ENCODE measurements at regions of chr4 and their contacts with region 1.

Region 1: DNA sequence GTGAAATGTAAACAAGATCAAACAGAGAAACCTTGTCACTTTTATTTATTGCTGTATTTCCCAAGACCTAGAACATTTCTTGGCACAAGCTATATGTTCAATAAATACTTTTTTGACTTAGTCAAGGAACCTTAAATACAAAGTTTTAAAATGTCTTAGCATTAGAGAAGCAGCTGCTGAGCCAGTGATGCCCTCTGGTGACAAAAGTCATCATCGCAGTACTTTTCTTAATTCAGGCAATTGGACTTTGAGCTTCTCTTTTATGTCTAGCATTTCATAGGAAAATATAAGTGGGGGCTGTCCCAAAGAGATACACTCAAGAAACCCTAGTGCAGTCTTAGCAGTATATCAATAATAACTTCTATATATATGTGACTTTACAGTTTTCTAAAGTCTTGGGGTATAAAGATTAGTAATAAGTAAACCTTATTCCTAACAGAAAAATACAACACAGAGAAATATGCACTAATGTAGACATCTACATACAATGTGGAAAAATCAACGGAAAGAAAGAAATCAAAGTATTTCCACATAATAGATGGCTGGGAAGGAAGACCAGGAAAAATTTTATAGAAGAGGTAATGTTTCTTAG is 118.4 kb downstream of the DTHD1 start:
- DNase-seq: peak in 32 of 35 experiments; percentile 7 to 79 (median 42)
- ATAC-seq: peak; percentile 40 to 62 (median 46)
- H3K4me3 ChIP-seq: no peak overlapping the region
- H3K4me3 Mint-ChIP-seq: no peak overlapping the region
- H3K27ac ChIP-seq: no peak overlapping the region
- H3K27ac Mint-ChIP-seq: no peak overlapping the region
- H3K4me1 ChIP-seq: peaks cover 0 to 4% of the 10 kb centered on the region in 2 experiments
- H3K4me1 Mint-ChIP-seq: peaks cover 0 to 7% (median 5%) of the 10 kb centered on the region in 3 donors
- H3K27me3 ChIP-seq: no peaks in the 10 kb centered on the region
- H3K27me3 Mint-ChIP-seq: no peaks in the 10 kb centered on the region

Region 2: GRCh38 chr4:36343501-36344175 is 56.2 kb before region 1 on chr4:
- CTCF ChIA-PET with region 1: interaction called, 54 to 74 read pairs
- POLR2A ChIA-PET with region 1: no interaction called
- DNase-seq: no peak
- ATAC-seq: no peak
- H3K4me3 ChIP-seq: no peak overlapping the region
- H3K4me3 Mint-ChIP-seq: no peak overlapping the region
- H3K27ac ChIP-seq: no peak overlapping the region
- H3K27ac Mint-ChIP-seq: no peak overlapping the region
- H3K4me1 ChIP-seq: peaks cover 0 to 2% of the 10 kb centered on the region in 2 experiments
- H3K4me1 Mint-ChIP-seq: peaks cover 2 to 4% (median 3%) of the 10 kb centered on the region in 3 donors
- H3K27me3 ChIP-seq: no peaks in the 10 kb centered on the region
- H3K27me3 Mint-ChIP-seq: no peaks in the 10 kb centered on the region

Region 3: GRCh38 chr4:36351082-36351666 is 48.7 kb before region 1 on chr4:
- CTCF ChIA-PET with region 1: interaction called, 54 to 74 read pairs
- POLR2A ChIA-PET with region 1: interaction called in 1 of 2 experiments, 3 read pairs
- DNase-seq: peak; percentile 48 to 84 (median 73)
- ATAC-seq: peak; percentile 74 to 87 (median 79)
- H3K4me3 ChIP-seq: no peak overlapping the region
- H3K4me3 Mint-ChIP-seq: no peak overlapping the region
- H3K27ac ChIP-seq: no peak overlapping the region
- H3K27ac Mint-ChIP-seq: no peak overlapping the region
- H3K4me1 ChIP-seq: peaks cover 0 to 2% of the 10 kb centered on the region in 2 experiments
- H3K4me1 Mint-ChIP-seq: peaks cover 3 to 16% (median 6%) of the 10 kb centered on the region in 3 donors
- H3K27me3 ChIP-seq: no peaks in the 10 kb centered on the region
- H3K27me3 Mint-ChIP-seq: no peaks in the 10 kb centered on the region

Region 4: DNA sequence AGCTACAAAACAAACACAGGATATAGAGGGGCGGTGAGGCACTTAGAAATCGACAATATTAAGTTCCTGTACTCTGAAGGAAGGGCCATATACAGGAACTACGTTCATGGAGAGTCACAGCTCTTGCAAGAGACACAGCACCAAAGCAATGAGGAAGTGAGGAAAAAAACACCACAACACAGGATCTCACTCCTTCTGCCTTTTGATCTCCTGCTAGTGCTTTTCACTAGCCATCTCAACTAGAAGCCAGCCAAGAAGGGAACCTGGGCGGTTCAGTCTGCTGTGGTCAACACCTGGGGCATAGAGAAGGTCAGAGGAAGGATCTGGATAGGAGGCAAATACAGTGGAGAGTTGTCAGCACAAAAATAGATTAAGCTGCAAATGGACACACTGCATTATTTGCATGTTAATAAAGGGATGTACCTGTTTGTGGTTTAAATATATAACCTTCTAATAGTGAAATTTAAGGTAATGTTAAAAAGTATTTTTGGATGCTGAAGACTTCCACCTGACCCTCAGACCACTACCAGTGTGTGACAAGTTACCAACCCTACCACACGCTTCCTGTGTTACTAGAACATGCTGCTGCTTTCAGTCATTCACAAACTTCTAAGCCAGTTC is 13.8 kb before region 1 on chr4:
- CTCF ChIA-PET with region 1: interaction called, 3 to 52 read pairs
- POLR2A ChIA-PET with region 1: interaction called, 3 to 4 read pairs
- DNase-seq: peak; percentile 6 to 83 (median 48)
- ATAC-seq: peak; percentile 97 to 99 (median 98)
- H3K4me3 ChIP-seq: no peak overlapping the region
- H3K4me3 Mint-ChIP-seq: peak overlapping the region; percentile 21 to 53 (median 43)
- H3K27ac ChIP-seq: peak overlapping the region; percentile 83
- H3K27ac Mint-ChIP-seq: peak overlapping the region; percentile 89 to 93
- H3K4me1 ChIP-seq: peaks cover 9 to 19% of the 10 kb centered on the region in 2 experiments
- H3K4me1 Mint-ChIP-seq: peaks cover 36 to 39% (median 37%) of the 10 kb centered on the region in 3 donors
- H3K27me3 ChIP-seq: no peaks in the 10 kb centered on the region
- H3K27me3 Mint-ChIP-seq: no peaks in the 10 kb centered on the region

Region 5: GRCh38 chr4:36523182-36523581 is 123.3 kb after region 1 on chr4:
- CTCF ChIA-PET with region 1: no interaction called
- POLR2A ChIA-PET with region 1: no interaction called
- DNase-seq: no peak
- ATAC-seq: no peak
- H3K4me3 ChIP-seq: no peak overlapping the region
- H3K4me3 Mint-ChIP-seq: no peak overlapping the region
- H3K27ac ChIP-seq: no peak overlapping the region
- H3K27ac Mint-ChIP-seq: no peak overlapping the region
- H3K4me1 ChIP-seq: no peaks in the 10 kb centered on the region
- H3K4me1 Mint-ChIP-seq: no peaks in the 10 kb centered on the region
- H3K27me3 ChIP-seq: no peaks in the 10 kb centered on the region
- H3K27me3 Mint-ChIP-seq: peaks cover 2 to 5% of the 10 kb centered on the region in 2 donors